HEK293 (cell line): ENCODE measurements at regions of chr15 and their contacts with region 1.

Region 1: GRCh38 chr15:81000624-81001151 is at the start of gene TLNRD1:
- H3K4me3 ChIP-seq: peak within 1 kb of the TSS; percentile 78
- H3K27ac ChIP-seq: peak within 1 kb of the TSS; percentile 94
- H3K4me1 ChIP-seq: peaks cover 7% of the 10 kb centered on the region
- CTCF ChIP-seq: no peak

Region 2: DNA sequence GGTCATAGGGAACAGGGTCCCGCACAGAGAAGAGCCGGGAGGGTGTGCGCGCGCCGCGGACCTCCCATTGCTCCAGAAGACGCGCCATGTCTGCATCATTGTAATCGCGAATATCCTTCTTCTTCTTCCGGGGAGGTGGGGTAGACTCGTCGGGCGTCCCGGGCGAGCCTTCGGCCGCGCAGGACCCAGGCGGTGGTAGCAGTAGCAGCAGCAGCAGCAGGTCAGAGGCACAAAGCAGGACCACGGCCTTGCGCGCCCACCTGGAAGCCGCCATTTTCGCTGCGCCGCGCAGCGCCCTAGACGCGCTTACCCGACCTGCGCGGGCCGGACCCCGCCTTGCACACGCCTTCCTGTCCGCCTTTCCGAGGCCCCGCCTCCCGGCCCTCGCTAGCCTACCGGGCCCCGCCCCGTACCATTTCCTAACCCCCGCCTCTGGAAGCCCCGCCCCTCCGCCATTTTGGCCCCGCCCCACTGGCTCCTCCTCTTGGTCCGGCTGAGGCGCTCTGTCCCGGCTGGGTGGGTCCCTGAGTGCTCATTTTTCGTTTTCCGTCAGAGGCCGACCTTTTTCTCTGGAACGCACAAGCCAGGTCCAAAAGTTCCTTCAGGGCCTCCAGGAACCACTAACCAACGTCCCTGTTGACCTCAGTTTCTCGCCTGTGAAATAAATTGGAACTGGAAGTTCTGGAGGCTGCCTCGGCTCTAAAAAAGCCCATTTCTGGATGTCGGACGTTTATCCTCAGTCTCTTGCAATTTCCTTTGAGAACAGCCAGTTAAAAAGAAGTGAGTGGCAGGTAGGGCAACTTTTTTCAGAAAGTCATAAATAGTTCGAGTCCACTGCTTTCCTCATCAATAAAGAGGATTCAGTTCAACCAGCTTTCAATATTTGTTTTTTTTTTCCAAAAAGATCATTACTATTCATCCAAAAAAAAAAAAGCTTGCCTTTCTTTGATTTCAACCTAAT is 10.9 kb before region 1 on chr15 and contains the start of gene MESD:
- CTCF ChIA-PET with region 1: interaction called, 3 read pairs
- POLR2A ChIA-PET with region 1: interaction called, 22 read pairs
- H3K4me3 ChIP-seq: peak within 1 kb of the TSS; percentile 95
- H3K27ac ChIP-seq: peak within 1 kb of the TSS; percentile 56
- H3K4me1 ChIP-seq: peaks cover 13% of the 10 kb centered on the region
- CTCF ChIP-seq: peak; percentile 42